ENCODE measurements at regions of chr9 and their contacts with region 1.

Region 1: DNA sequence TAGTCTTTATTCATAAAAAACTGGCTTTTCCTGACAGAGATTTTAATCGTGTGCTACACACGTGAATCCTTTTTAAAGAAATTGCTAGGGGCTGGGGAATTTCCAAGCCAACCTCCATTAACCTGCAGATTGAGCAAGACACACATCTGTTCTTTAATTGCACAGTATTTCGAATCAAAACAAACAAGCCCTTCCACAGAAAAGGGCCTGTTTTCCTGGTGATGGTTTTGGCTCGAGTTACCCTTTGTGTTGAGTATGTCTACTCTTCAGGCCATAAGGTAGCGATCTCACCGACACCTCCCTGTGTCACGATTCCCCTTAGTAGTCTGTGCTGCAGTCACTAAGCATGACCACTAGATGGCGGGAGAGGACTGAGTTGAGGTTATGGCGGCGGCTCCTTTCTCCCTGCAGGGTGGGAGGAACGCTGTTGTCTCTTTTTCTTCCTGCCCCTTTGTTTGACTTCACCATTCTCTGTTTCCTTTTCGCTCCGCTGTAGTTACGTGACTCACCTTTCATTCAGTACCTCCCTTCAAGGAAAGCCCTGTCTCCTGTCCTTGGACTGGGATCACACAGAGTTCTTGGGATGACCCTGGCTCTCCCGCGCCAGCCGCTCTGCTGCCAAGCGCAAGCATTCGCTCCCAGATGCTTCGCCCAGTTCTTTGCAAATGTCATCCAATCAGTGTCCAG is 137.1 kb upstream of the SLC24A2 start:
- DNase-seq: peak; percentile 90
- H3K4me3 Mint-ChIP-seq: peak overlapping the region; percentile 57
- H3K27ac Mint-ChIP-seq: no peak overlapping the region
- H3K4me1 Mint-ChIP-seq: peaks cover 18% of the 10 kb centered on the region
- H3K27me3 Mint-ChIP-seq: peaks cover 2% of the 10 kb centered on the region

Region 2: DNA sequence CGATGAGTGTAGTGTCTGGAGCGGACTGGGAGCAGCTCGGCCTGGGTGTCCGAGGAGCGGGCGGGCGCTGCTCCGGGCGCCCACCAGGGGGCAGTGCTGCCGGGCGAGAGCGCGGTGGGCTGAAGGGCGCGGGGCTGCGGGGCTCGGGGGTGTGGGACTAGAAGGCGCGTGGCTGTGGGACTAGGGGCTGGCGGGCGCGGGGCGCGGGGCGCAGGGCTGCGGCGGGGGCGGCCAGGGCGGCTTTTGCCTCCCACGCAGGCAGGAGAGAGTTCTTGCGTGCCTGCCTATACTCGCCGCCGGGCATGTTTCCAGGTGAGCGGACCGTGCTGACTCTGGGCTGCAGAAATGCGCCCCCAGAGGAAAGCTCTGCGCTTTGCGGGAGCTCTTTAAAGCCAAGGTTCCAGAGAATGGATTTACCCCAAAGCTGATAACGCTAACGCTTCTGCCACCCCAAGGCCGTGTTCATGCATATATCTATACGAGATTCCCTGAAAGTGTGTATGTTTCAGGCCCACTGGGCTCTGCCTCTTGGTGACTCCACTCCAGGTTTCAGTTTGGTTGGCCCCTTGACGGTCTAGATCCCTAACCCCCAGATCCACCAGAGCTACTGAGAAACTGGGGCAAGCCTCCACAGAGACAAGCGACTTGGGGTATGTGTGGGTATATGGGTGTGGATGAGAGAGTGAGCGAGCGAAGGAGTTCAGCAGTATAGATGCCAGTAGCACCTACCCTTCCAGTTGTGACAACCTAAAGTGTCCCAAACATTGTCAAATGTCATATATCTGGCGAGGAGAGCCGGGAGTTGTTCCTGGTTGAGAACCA is 461.0 kb before region 1 on chr9:
- CTCF ChIA-PET with region 1: no interaction called
- intact Hi-C with region 1: loop called (anchors 2 kb)
- DNase-seq: peak; percentile 69
- H3K4me3 Mint-ChIP-seq: peak overlapping the region; percentile 81
- H3K27ac Mint-ChIP-seq: no peak overlapping the region
- H3K4me1 Mint-ChIP-seq: peaks cover 9% of the 10 kb centered on the region
- H3K27me3 Mint-ChIP-seq: no peaks in the 10 kb centered on the region

Region 3: DNA sequence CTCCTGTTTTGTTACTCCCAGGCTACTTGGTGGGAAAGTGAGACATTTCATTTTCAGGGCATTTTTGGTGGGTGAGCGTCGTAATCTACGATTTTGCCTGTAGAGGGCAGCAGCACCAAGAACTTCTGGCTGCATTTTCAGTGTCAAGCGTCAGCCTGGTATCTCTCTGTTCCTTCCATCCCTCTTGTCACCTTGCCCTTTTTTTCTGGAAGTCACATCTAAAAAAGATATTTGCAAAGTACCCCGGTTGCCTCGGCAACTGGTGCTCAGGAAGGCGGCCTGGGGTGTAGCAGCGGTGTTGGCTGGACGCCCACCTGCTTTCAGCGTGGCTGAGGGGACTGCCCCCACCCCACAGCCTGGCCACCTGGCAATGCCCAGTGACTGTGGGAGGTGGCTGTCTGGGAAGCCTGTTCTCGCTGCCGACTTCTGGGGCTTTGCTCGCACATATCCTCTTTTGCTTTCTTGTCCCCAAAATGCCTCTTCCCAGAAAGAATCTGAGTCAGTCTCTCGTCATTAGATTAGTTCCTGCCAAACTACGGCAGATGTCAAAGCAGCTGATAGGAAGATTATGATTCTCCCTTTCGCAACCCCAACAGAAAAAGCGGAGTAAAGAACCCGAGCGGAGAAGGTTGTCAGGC is 432.7 kb before region 1 on chr9:
- CTCF ChIA-PET with region 1: interaction called, 4 read pairs
- intact Hi-C with region 1: loop called (anchors 2 kb)
- DNase-seq: peak; percentile 68
- H3K4me3 Mint-ChIP-seq: peak overlapping the region; percentile 16
- H3K27ac Mint-ChIP-seq: peak overlapping the region; percentile 33
- H3K4me1 Mint-ChIP-seq: peaks cover 20% of the 10 kb centered on the region
- H3K27me3 Mint-ChIP-seq: peaks cover 5% of the 10 kb centered on the region

Region 4: DNA sequence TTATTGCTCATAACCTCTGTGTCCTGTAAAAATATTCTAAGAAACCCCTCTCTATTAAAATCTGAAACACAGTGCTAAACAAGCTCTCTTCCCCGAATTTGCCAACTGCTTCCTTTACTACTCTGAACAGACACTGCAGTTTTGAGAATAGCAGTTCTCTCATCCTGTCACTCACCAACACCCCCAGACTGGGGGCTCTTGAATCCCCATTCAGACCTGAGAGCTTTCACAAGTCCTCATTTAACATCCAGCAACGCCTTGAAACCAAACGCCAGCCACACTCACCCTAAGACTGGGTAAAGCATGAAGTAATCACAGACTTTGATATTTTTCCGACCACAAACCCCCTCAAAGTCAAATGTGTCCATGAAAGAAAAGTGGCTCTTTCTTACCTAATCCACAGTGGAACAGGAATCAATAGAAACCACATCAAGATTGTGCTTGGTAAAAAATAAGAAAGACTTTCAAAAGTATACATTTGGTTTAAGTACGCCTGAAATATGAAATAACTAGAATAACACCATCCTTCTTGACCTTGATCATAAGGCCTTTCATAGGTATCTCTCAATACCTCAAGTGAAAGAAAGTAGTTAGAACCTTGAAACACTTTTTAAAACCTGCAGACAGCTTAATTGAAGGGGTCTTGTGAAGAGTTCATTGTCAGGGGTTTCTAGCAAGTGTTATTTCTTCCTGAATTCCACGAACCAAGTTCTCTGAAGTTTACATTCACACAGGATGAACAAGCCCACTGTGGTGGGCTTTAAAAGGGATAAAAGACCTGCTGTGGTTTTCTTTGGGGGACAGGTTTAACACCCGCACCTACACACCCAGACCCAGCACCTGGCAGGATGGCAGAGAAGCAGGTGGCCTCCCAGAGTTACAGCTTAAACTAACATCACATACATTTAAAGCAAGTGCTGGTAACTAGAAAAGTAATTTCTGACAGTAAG is 283.7 kb after region 1 on chr9:
- CTCF ChIA-PET with region 1: no interaction called
- intact Hi-C with region 1: loop called (anchors 5 kb)
- DNase-seq: peak; percentile 56
- H3K4me3 Mint-ChIP-seq: no peak overlapping the region
- H3K27ac Mint-ChIP-seq: peak overlapping the region; percentile 70
- H3K4me1 Mint-ChIP-seq: peaks cover 31% of the 10 kb centered on the region
- H3K27me3 Mint-ChIP-seq: no peaks in the 10 kb centered on the region

Region 5: GRCh38 chr9:20271096-20271495 is 345.1 kb after region 1 on chr9:
- CTCF ChIA-PET with region 1: no interaction called
- intact Hi-C with region 1: loop called (anchors 5 kb)
- DNase-seq: no peak
- H3K4me3 Mint-ChIP-seq: no peak overlapping the region
- H3K27ac Mint-ChIP-seq: no peak overlapping the region
- H3K4me1 Mint-ChIP-seq: peaks cover 16% of the 10 kb centered on the region
- H3K27me3 Mint-ChIP-seq: no peaks in the 10 kb centered on the region

Region 6: GRCh38 chr9:20558566-20559016 is 632.6 kb after region 1 on chr9:
- CTCF ChIA-PET with region 1: no interaction called
- intact Hi-C with region 1: loop called (anchors 5 kb)
- DNase-seq: peak; percentile 70
- H3K4me3 Mint-ChIP-seq: peak overlapping the region; percentile 36
- H3K27ac Mint-ChIP-seq: peak overlapping the region; percentile 59
- H3K4me1 Mint-ChIP-seq: peaks cover 86% of the 10 kb centered on the region
- H3K27me3 Mint-ChIP-seq: no peaks in the 10 kb centered on the region

Region 7: DNA sequence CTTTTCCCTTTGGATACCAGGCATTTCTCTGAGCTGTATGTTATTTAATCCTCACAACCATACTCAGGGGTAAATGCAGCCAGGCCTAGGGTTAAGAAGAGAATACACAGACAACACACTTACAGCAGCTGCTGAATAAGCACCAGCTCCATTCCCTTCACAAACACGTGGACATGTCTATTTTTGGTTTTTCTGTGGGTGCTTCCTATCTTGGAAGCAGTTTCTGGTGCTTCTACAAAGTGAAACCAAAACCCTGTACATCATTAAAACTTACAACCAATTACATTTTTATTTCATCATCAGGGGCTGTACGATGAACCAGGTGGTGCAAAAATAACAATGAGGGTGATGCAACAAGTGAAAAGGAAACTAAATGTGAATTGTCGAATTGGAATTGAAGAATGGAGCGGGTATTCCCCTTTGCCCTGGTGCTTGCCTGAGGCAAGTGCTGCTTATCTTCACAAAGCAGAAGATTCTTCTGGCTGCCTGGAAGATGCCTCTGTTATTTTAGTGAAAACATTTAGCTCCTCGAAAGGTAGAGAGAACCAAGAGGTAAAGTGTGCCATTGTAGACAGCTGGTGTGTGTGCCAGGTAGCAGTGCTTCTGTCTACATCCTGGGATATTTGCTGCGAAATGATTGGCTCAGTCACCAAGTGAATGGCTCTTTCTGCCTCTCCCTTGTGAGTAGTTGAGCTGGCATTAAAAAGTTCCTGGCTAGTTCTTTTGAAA is 1170.4 kb after region 1 on chr9:
- CTCF ChIA-PET with region 1: no interaction called
- intact Hi-C with region 1: loop called (anchors 5 kb)
- DNase-seq: peak; percentile 67
- H3K4me3 Mint-ChIP-seq: peak overlapping the region; percentile 76
- H3K27ac Mint-ChIP-seq: peak overlapping the region; percentile 94
- H3K4me1 Mint-ChIP-seq: peaks cover 39% of the 10 kb centered on the region
- H3K27me3 Mint-ChIP-seq: no peaks in the 10 kb centered on the region